HCT116 (cell line): ENCODE measurements at regions of chr4 and their contacts with region 1.

Region 1: GRCh38 chr4:113394730-113395530 is 345.5 kb downstream of the ANK2 start:
- DNase-seq: peak; percentile 82
- ATAC-seq: peak; percentile 97
- H3K4me3 ChIP-seq: no peak overlapping the region
- H3K27ac ChIP-seq: no peak overlapping the region
- H3K4me1 ChIP-seq: peaks cover 4 to 20% of the 10 kb centered on the region in 2 experiments; a peak in 2 of 4 replicates
- H3K27me3 ChIP-seq: no peaks in the 10 kb centered on the region
- CTCF ChIP-seq: peak; percentile 56 to 86 (median 79)
- POLR2A ChIP-seq: no peak
- RAD21 ChIP-seq: peak; percentile 97

Region 2: GRCh38 chr4:113316879-113317278 is 78.1 kb before region 1 on chr4:
- CTCF ChIA-PET with region 1: no interaction called
- POLR2A ChIA-PET with region 1: no interaction called
- RAD21 ChIA-PET with region 1: no interaction called
- intact Hi-C with region 1: no loop called
- DNase-seq: no peak
- ATAC-seq: no peak
- H3K4me3 ChIP-seq: no peak overlapping the region
- H3K27ac ChIP-seq: no peak overlapping the region
- H3K4me1 ChIP-seq: peaks cover 0 to 7% of the 10 kb centered on the region in 2 experiments; a peak in 2 of 4 replicates
- H3K27me3 ChIP-seq: no peaks in the 10 kb centered on the region
- CTCF ChIP-seq: no peak
- POLR2A ChIP-seq: no peak
- RAD21 ChIP-seq: no peak

Region 3: GRCh38 chr4:113639326-113639725 is 244.4 kb after region 1 on chr4:
- CTCF ChIA-PET with region 1: no interaction called
- POLR2A ChIA-PET with region 1: no interaction called
- RAD21 ChIA-PET with region 1: no interaction called
- intact Hi-C with region 1: no loop called
- DNase-seq: no peak
- ATAC-seq: no peak
- H3K4me3 ChIP-seq: no peak overlapping the region
- H3K27ac ChIP-seq: no peak overlapping the region
- H3K4me1 ChIP-seq: peaks cover 13 to 19% of the 10 kb centered on the region in 2 experiments; a peak in 3 of 4 replicates
- H3K27me3 ChIP-seq: no peaks in the 10 kb centered on the region
- CTCF ChIP-seq: no peak
- POLR2A ChIP-seq: no peak
- RAD21 ChIP-seq: no peak

Region 4: GRCh38 chr4:113761620-113762185 is 366.8 kb after region 1 on chr4 and contains the start of gene CAMK2D:
- CTCF ChIA-PET with region 1: interaction called, 3 read pairs
- POLR2A ChIA-PET with region 1: no interaction called
- RAD21 ChIA-PET with region 1: no interaction called
- intact Hi-C with region 1: loop called (anchors 5 kb)
- DNase-seq: peak; percentile 80
- ATAC-seq: peak; percentile 67
- H3K4me3 ChIP-seq: peak within 1 kb of the TSS; percentile 79 to 88
- H3K27ac ChIP-seq: peak within 1 kb of the TSS; percentile 95
- H3K4me1 ChIP-seq: peaks cover 15 to 25% of the 10 kb centered on the region in 2 experiments
- H3K27me3 ChIP-seq: no peaks in the 10 kb centered on the region
- CTCF ChIP-seq: peak; percentile 39 to 94 (median 56)
- POLR2A ChIP-seq: no peak
- RAD21 ChIP-seq: peak; percentile 94
- total RNA-seq, gene CAMK2D: 67.0 TPM

Region 5: GRCh38 chr4:113908829-113909228 is 513.9 kb after region 1 on chr4:
- CTCF ChIA-PET with region 1: no interaction called
- POLR2A ChIA-PET with region 1: no interaction called
- RAD21 ChIA-PET with region 1: no interaction called
- intact Hi-C with region 1: loop called (anchors 5 kb)
- DNase-seq: no peak
- ATAC-seq: no peak
- H3K4me3 ChIP-seq: no peak overlapping the region
- H3K27ac ChIP-seq: no peak overlapping the region
- H3K4me1 ChIP-seq: no peaks in the 10 kb centered on the region
- H3K27me3 ChIP-seq: no peaks in the 10 kb centered on the region
- CTCF ChIP-seq: peak in 1 of 3 experiments; percentile 26; a peak in 1 of 6 replicates
- POLR2A ChIP-seq: no peak
- RAD21 ChIP-seq: peak; percentile 46

Region 6: DNA sequence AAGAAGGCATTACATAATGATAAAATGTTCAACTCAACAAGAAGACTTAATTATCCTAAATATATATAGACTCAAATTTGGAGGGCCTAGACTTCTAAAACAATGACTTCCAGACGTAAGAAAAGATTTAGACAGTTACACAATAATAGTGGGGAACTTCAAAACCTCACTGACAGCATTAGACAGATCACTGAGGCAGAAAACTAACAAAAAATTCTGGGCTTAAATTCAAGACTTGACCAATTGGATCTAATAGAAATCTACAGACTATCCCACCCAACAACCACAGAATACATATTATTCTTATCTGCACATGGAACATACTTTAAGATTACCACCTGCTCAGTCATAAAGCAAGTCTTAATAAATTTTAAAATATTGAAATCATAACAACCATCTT is 677.9 kb after region 1 on chr4:
- CTCF ChIA-PET with region 1: no interaction called
- POLR2A ChIA-PET with region 1: no interaction called
- RAD21 ChIA-PET with region 1: no interaction called
- intact Hi-C with region 1: loop called (anchors 5 kb)
- DNase-seq: no peak
- ATAC-seq: no peak
- H3K4me3 ChIP-seq: no peak overlapping the region
- H3K27ac ChIP-seq: no peak overlapping the region
- H3K4me1 ChIP-seq: peaks cover 0 to 8% of the 10 kb centered on the region in 2 experiments; a peak in 2 of 4 replicates
- H3K27me3 ChIP-seq: no peaks in the 10 kb centered on the region
- CTCF ChIP-seq: no peak
- POLR2A ChIP-seq: no peak
- RAD21 ChIP-seq: no peak

Region 7: GRCh38 chr4:114694770-114695169 is 1299.8 kb after region 1 on chr4:
- CTCF ChIA-PET with region 1: no interaction called
- POLR2A ChIA-PET with region 1: no interaction called
- RAD21 ChIA-PET with region 1: no interaction called
- intact Hi-C with region 1: loop called (anchors 10 kb)
- DNase-seq: peak; percentile 28
- ATAC-seq: peak; percentile 64
- H3K4me3 ChIP-seq: no peak overlapping the region
- H3K27ac ChIP-seq: no peak overlapping the region
- H3K4me1 ChIP-seq: no peaks in the 10 kb centered on the region
- H3K27me3 ChIP-seq: no peaks in the 10 kb centered on the region
- CTCF ChIP-seq: peak; percentile 33 to 62 (median 57); a peak in 4 of 6 replicates
- POLR2A ChIP-seq: no peak
- RAD21 ChIP-seq: peak; percentile 79